ENCODE measurements at regions of chr6 and their contacts with region 1.

Region 1: GRCh38 chr6:166275714-166276166 is 32.5 kb downstream of the PRR18 start:
- DNase-seq: peak; percentile 51 to 89 (median 65)
- ATAC-seq: peak in 3 of 4 donors; percentile 76 to 85 (median 84)
- H3K4me3 ChIP-seq: no peak overlapping the region
- H3K27ac ChIP-seq: no peak overlapping the region
- H3K4me1 ChIP-seq: peaks cover 0 to 6% (median 0%) of the 10 kb centered on the region in 12 donors
- H3K27me3 ChIP-seq: peaks cover 0 to 14% (median 4%) of the 10 kb centered on the region in 9 donors
- CTCF ChIP-seq: peak; percentile 95 to 100 (median 99)
- POLR2A ChIP-seq: no peak

Region 2: DNA sequence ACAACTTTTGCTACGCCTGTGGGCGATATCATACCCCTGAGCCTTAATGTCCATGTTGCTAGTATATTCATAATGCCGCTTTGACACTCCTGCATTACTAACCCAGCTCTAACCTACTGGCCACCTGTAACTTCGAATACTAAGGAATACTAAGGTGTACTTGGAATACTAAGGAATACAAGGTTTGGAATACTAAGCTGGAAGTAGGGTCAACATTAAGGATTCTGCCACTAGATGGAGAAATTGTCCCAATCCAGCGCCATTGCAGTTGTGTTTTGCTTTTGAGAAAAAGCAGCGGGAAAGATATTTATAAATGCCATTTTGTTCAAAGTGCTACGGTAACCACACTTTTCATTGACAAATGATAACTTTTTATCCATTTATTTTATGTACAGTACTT is 118.8 kb before region 1 on chr6:
- intact Hi-C with region 1: loop called in 1 of 10 experiments (anchors 5 kb)
- DNase-seq: no peak
- ATAC-seq: no peak
- H3K4me3 ChIP-seq: no peak overlapping the region
- H3K27ac ChIP-seq: no peak overlapping the region
- H3K4me1 ChIP-seq: no peaks in the 10 kb centered on the region
- H3K27me3 ChIP-seq: peaks cover 0 to 45% (median 0%) of the 10 kb centered on the region in 9 donors
- CTCF ChIP-seq: peak in 8 of 12 donors; percentile 13 to 52 (median 40)
- POLR2A ChIP-seq: no peak

Region 3: DNA sequence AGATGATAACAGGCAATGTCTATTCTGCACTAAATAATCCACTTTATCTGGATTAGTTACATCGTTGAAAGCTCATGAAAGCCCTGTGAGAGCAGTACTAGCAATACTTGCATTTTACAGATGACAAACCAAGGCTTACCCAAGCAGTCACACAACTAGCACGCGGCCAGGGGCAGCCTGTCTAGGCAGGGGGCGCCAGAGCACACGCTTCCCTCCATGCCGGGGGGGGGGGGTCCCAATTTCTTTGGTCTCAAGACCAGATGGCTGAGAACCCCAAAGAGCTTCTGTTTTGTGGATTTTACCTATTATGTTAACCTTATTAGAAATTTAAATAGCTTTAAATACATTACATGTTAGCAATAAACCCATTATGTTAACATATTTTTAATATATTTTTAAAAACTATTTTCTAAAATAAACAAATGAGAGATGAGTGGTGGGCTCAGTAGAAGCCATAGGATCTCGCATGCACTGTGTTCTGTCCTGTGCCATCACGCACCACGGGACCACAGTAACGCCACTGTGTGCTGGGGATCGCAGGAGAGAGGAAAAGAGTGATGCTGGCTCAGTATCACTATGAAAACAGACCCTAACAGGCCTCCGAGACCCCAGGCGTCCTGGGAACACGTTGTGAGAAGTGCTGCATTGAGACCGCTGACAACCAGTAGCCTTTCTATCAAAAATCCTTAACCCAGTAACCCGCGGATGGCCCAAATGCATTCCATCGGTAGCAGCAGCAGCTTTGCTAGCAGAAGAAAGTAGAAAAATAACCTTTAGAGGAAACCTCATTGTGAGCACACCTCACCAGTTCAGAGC is 37.7 kb after region 1 on chr6:
- intact Hi-C with region 1: no loop called
- DNase-seq: no peak
- ATAC-seq: peak in 3 of 4 donors; percentile 59 to 94 (median 86)
- H3K4me3 ChIP-seq: no peak overlapping the region
- H3K27ac ChIP-seq: no peak overlapping the region
- H3K4me1 ChIP-seq: peaks cover 0 to 3% (median under 1%) of the 10 kb centered on the region in 12 donors
- H3K27me3 ChIP-seq: peaks cover 0 to 17% (median 9%) of the 10 kb centered on the region in 9 donors
- CTCF ChIP-seq: peak; percentile 50 to 85 (median 68)
- POLR2A ChIP-seq: no peak

Measured in heart left ventricle (tissue), 16 donors.